Dendritic cell treated with granulocyte-macrophage colony-stimulating factor and Interleukin-4, amounts not matched to agents 40 ng/mL and 50 ng/mL, for 4 days (primary cell): ENCODE measurements at regions of chr6 and their contacts with region 1.

Region 1: DNA sequence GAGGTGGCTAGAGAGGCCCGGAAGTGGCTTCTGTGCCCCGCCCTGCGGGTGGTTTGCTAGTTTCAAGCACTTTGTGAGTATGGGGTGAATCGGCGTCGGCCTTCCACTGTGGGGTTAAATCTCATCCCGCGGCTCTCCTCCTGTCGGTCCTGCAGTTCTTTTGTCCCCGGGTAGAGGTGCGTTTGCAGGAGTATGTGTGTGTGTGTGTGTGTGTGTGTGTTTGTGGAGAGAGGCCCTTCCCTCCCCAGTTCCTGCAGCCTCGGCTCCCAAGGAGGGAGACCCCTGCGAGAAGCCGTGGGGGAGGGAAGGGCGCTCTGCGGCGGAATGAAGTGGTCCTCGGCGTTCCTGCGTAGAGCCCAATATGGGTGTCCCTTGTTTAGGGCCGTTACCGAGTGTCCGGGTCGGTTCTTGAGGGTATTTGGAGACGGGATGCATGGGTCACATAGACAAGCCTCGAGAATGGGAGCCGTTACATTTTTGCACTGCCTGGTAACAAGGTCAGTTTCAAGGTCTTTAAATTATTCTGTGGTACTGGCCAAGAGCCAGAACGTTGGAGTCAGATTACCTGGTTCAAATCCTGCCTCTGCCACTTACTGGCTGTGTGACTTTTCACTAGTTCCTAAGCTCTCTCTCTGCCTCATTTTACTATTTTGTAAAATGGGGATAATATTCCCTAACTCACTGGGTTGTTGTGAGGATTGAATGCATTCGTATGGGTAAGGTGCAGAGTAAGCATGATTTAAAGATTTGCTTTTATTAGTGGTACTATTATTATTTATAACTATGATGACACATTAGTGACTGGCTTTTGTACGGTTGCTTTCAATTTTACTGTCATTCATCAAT is at the start of gene ZKSCAN3:
- H3K4me3 Mint-ChIP-seq: peak within 1 kb of the TSS; percentile 100
- H3K27ac Mint-ChIP-seq: peak within 1 kb of the TSS; percentile 100
- H3K4me1 Mint-ChIP-seq: peaks cover 49% of the 10 kb centered on the region
- H3K27me3 Mint-ChIP-seq: peaks cover 3% of the 10 kb centered on the region

Region 2: GRCh38 chr6:28161410-28162079 is 188.6 kb before region 1 on chr6:
- intact Hi-C with region 1: no loop called
- H3K4me3 Mint-ChIP-seq: peak overlapping the region; percentile 73
- H3K27ac Mint-ChIP-seq: peak overlapping the region; percentile 78
- H3K4me1 Mint-ChIP-seq: peaks cover 11% of the 10 kb centered on the region
- H3K27me3 Mint-ChIP-seq: peaks cover 2% of the 10 kb centered on the region

Region 3: GRCh38 chr6:28252009-28252975 is 97.8 kb before region 1 on chr6 and contains the start of gene ZKSCAN4:
- intact Hi-C with region 1: loop called (anchors 5 kb)
- H3K4me3 Mint-ChIP-seq: peak within 1 kb of the TSS; percentile 97
- H3K27ac Mint-ChIP-seq: peak within 1 kb of the TSS; percentile 90
- H3K4me1 Mint-ChIP-seq: peaks cover 14% of the 10 kb centered on the region
- H3K27me3 Mint-ChIP-seq: no peaks in the 10 kb centered on the region

Region 4: DNA sequence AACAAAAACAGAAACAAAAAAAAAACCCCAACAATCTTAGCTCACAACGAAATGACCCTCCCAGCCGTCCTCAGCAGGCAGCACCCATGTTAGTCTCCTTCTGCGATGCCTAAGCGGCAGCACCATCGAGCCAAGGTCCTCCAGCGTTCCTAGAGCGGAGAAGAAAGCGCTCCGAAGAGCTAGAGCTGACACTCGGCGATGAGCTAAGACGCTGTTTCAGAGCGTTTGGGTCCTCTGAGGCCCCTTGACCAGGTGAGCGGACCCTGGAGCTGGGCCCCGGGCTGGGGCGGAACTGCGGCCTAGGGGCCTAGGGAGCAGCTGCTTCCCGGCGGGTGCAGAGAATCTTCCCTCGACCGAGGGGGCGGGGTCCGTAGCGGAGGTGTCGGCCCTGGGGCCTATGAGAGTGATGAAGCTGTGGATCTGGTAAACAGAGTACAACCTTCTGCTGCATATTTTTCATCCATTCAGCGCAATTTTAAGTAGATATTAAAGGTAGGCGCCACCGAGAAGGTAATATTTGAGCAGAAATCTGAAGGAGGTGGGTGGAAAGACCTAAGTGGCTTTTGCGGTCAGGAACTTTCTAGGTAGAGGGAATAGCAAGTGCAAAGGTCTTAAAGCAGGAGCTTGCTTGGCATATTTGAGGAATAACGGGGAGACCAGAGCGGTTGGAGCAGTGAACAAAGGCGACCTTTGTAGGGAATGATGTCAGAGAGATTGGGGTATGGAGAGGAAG is 83.0 kb before region 1 on chr6 and contains the start of gene ZSCAN26:
- intact Hi-C with region 1: no loop called
- H3K4me3 Mint-ChIP-seq: no peak within 1 kb of the TSS
- H3K27ac Mint-ChIP-seq: no peak within 1 kb of the TSS
- H3K4me1 Mint-ChIP-seq: no peaks in the 10 kb centered on the region
- H3K27me3 Mint-ChIP-seq: no peaks in the 10 kb centered on the region

Region 5: GRCh38 chr6:28281288-28282064 is 68.6 kb before region 1 on chr6 and contains the start of gene PGBD1:
- intact Hi-C with region 1: loop called (anchors 5 kb)
- H3K4me3 Mint-ChIP-seq: peak within 1 kb of the TSS; percentile 85
- H3K27ac Mint-ChIP-seq: peak within 1 kb of the TSS; percentile 60
- H3K4me1 Mint-ChIP-seq: peaks cover 13% of the 10 kb centered on the region
- H3K27me3 Mint-ChIP-seq: peaks cover 11% of the 10 kb centered on the region

Region 6: DNA sequence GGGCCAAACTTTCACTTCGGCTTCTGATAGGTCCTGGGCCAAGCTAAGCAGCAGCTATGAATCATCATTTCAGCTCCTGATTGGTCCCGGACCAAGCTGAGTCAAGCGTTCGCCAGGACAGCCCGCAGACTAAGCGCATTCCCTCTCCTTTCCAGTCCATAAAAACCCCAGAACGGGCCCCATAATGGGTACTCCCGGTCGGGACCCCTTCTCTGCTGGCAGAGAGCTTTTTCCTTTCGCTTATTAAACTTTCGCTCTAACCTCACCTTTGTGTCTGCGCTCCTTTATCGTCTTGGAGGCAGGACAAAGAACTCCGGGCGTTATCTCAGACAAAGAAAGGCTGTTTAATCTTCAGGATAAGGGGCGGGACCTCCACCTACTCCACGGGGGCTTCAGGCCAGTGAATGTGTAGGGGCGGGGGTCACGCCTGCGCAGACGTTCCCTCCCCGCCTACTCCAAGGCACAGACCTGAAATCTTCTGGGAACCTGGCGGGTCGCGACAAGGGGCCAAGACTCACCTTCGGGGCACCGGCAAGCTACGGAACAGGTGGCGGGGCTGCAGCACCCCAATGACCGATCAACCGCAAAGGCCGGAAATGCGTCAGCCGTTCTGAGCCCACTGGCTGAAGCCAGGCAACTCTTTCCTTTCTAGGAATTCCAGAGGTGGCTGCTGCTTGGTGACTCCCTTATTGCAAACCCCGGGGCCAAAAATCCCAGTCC is 14.4 kb before region 1 on chr6 and contains the start of gene ZSCAN31:
- intact Hi-C with region 1: loop called (anchors 2 kb)
- H3K4me3 Mint-ChIP-seq: no peak within 1 kb of the TSS
- H3K27ac Mint-ChIP-seq: no peak within 1 kb of the TSS
- H3K4me1 Mint-ChIP-seq: peaks cover 25% of the 10 kb centered on the region
- H3K27me3 Mint-ChIP-seq: peaks cover 2% of the 10 kb centered on the region